WTC11 (cell line): ENCODE measurements at regions of chr10 and their contacts with region 1.

Region 1: DNA sequence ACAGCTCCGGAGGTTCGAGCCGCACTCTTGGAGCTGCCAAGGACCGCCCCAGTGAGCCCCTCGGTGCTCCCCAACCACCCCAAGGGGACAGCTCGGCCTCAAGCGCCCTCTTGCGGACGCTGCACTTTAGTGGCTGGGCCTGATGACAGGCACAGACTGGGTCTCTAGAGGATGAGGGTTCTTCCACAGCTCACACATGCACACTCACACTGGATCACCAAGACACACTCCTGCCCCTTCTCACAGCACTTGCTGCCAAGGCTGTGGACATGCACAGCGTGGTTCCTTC is 2.1 kb downstream of the RET start:
- DNase-seq: peak; percentile 88
- ATAC-seq: peak; percentile 54
- H3K4me3 Mint-ChIP-seq: 0 out of 2 replicates have a peak overlapping the region, but pooled peaks have one; percentile 73
- H3K27ac Mint-ChIP-seq: no peak overlapping the region
- H3K4me1 Mint-ChIP-seq: peaks cover 14% of the 10 kb centered on the region
- H3K27me3 Mint-ChIP-seq: peaks cover 35% of the 10 kb centered on the region
- CTCF ChIP-seq: peak; percentile 69

Region 2: DNA sequence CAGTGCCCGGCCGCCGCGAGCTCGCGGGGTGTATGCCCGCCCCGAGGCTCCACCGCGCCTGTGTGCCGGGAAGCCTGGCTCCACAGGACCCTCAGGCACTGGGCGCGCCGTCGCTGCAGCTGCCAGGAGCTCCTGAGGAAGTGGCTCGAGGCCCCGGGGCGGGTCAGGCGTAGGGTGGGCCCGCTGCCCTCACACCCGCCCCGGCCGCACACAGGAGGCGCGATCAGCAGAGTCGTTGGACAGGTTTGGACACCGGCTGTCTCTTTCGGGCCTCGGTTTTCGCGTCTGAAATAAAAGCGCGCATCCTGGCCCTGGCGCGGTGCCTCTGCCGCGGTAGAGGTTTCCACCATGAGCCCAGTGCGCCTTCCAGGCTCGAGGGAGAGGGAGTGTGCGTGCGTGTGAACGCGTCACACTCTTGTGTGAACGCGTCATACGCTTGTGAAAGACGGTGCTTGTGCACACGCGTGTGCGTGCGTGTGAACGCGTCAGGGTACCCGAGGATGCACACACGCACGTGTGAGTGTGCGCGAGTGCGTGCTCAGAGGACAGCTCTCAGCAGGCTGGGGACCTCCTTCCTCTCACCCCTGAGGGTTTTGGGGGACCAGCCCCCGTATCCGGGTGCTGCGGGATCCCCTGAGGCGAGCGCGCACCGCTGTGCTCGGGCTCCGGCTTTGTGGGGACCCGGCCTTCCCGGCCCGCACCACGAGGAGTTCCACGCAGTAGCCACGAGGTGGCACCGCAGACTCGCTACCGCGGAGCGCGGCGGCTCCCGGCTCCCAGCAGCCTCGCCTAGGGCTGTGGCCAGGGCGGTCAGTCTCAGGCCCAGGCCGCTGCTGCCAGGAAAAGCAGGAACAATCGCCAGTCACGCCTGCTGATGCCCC is 212.6 kb before region 1 on chr10:
- CTCF ChIA-PET with region 1: interaction called, 66 read pairs
- POLR2A ChIA-PET with region 1: no interaction called
- DNase-seq: peak; percentile 87
- ATAC-seq: peak; percentile 98
- H3K4me3 Mint-ChIP-seq: peak overlapping the region; percentile 67
- H3K27ac Mint-ChIP-seq: no peak overlapping the region
- H3K4me1 Mint-ChIP-seq: peaks cover 23% of the 10 kb centered on the region
- H3K27me3 Mint-ChIP-seq: peaks cover 20% of the 10 kb centered on the region
- CTCF ChIP-seq: peak; percentile 41; the same call in 1 of the 2 replicates

Region 3: GRCh38 chr10:42926843-42927242 is 152.1 kb before region 1 on chr10:
- CTCF ChIA-PET with region 1: interaction called, 11 read pairs
- POLR2A ChIA-PET with region 1: no interaction called
- DNase-seq: peak; percentile 71
- ATAC-seq: peak; percentile 98
- H3K4me3 Mint-ChIP-seq: no peak overlapping the region
- H3K27ac Mint-ChIP-seq: no peak overlapping the region
- H3K4me1 Mint-ChIP-seq: peaks cover 32% of the 10 kb centered on the region
- H3K27me3 Mint-ChIP-seq: peaks cover 17% of the 10 kb centered on the region
- CTCF ChIP-seq: no peak

Region 4: DNA sequence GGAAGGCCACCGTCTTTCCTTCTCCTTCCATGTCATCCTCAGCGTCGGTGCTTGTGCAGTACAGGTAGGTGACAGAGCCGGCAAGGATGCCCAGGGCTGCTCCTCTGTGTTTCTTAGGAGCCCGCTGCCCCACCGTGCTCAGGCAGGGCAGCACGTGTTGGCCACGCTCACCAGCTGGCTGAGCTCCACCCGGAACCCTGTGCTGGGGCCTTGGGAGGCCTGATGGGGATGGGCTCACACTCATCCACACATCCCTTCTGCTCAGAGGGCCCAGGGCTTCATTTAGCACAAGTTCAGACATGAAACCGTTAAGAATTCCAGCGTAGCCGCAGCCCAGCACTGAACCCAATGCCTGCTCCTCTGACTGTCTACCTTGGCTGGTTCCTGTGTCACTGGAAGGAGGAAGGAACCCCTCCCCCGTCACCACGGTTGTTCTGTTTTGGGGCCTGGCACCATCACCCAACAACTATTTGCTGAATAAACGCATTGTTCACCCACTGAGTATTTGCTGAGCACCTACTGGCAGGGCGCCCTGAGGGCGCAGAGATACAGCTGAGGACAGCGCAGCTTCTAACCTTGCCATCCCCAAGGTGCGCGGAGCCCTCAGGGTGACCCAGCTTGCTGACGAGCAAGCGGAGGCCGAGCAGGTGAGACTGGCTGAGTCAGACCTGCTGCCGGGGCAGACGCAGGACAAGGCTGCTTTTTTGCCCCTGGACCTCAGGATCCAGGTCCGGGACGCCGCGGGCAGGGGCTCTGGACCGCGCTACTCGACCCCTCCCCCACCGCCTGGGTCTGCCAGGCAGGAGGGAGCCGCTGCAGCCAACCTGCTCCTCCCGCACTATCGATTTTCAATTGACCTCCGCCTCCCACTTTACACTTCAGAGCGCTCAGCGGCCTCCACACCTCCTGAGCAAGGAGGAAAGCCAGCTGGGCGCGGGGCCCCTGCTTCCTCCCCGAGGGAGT is 52.6 kb before region 1 on chr10:
- CTCF ChIA-PET with region 1: interaction called, 17 read pairs
- POLR2A ChIA-PET with region 1: no interaction called
- DNase-seq: peak; percentile 77
- ATAC-seq: peak; percentile 89
- H3K4me3 Mint-ChIP-seq: peak overlapping the region; percentile 60
- H3K27ac Mint-ChIP-seq: 0 out of 2 replicates have a peak overlapping the region, but pooled peaks have one; percentile 46
- H3K4me1 Mint-ChIP-seq: peaks cover 36% of the 10 kb centered on the region
- H3K27me3 Mint-ChIP-seq: peaks cover 61% of the 10 kb centered on the region
- CTCF ChIP-seq: no peak

Region 5: DNA sequence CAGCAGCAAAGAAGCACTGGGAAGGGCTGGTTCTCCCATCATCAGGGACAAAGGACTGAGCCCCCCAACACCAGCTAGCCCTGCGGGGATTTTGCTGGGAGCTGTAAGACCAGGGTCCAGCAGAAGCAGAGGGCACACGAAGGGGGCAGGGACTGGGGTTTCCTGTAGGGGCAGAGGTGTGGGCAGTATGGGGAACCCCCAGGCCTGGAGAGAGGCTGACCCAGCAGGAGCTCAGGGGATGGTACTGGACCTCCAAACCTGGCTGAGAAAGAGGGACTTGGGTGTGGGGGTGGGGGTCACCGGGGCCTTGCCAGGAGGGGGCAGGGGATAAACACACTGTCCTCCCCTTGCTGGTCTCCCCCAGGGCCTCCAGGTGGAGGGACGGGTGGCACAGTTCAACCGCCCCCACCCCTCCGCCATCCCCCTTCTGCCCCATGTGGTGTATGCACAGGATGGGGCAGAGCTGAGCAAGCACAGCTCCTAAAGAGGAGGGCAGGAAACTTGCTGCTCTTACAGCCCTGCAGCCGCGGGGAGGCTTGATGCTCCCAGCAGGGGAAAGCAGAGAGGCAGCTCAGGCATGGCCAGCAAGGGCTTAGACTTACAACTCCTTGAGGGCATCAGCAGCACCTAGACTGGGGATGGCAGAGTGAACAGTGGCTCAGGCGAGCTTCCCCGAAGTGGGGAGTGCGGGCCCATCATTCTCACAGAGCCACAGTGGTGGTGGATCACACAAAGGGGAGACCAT is 14.4 kb before region 1 on chr10:
- CTCF ChIA-PET with region 1: interaction called, 29 read pairs
- POLR2A ChIA-PET with region 1: no interaction called
- DNase-seq: no peak
- ATAC-seq: peak; percentile 60
- H3K4me3 Mint-ChIP-seq: no peak overlapping the region
- H3K27ac Mint-ChIP-seq: no peak overlapping the region
- H3K4me1 Mint-ChIP-seq: peaks cover 14% of the 10 kb centered on the region
- H3K27me3 Mint-ChIP-seq: no peaks in the 10 kb centered on the region
- CTCF ChIP-seq: no peak

Region 6: GRCh38 chr10:43105102-43105785 is 26.3 kb after region 1 on chr10:
- CTCF ChIA-PET with region 1: interaction called, 21 read pairs
- POLR2A ChIA-PET with region 1: interaction called, 3 read pairs
- DNase-seq: peak; percentile 83
- ATAC-seq: peak; percentile 85
- H3K4me3 Mint-ChIP-seq: peak overlapping the region; percentile 72
- H3K27ac Mint-ChIP-seq: no peak overlapping the region
- H3K4me1 Mint-ChIP-seq: no peaks in the 10 kb centered on the region
- H3K27me3 Mint-ChIP-seq: peaks cover 22% of the 10 kb centered on the region
- CTCF ChIP-seq: peak; percentile 95

Region 7: GRCh38 chr10:43231523-43232078 is 152.7 kb after region 1 on chr10:
- CTCF ChIA-PET with region 1: no interaction called
- POLR2A ChIA-PET with region 1: no interaction called
- DNase-seq: peak; percentile 6
- ATAC-seq: no peak
- H3K4me3 Mint-ChIP-seq: no peak overlapping the region
- H3K27ac Mint-ChIP-seq: no peak overlapping the region
- H3K4me1 Mint-ChIP-seq: peaks cover 7% of the 10 kb centered on the region
- H3K27me3 Mint-ChIP-seq: peaks cover 51% of the 10 kb centered on the region
- CTCF ChIP-seq: no peak